Mammary epithelial cell (primary cell): ENCODE measurements at regions of chr9 and their contacts with region 1.

Region 1: GRCh38 chr9:69174616-69175463 is 763 bp downstream of the TJP2 start:
- DNase-seq: peak; percentile 97
- H3K4me3 ChIP-seq: peak overlapping the region; percentile 69 to 95 (median 76)
- H3K27ac ChIP-seq: peak overlapping the region; percentile 99
- H3K4me1 ChIP-seq: peaks cover 79% of the 10 kb centered on the region
- H3K27me3 ChIP-seq: no peaks in the 10 kb centered on the region
- CTCF ChIP-seq: no peak

Region 2: GRCh38 chr9:69107771-69108170 is 67.1 kb before region 1 on chr9:
- CTCF ChIA-PET with region 1: no interaction called
- dilution Hi-C with region 1: no loop called
- in situ Hi-C with region 1: no loop called
- intact Hi-C with region 1: no loop called
- DNase-seq: no peak
- H3K4me3 ChIP-seq: no peak overlapping the region
- H3K27ac ChIP-seq: no peak overlapping the region
- H3K4me1 ChIP-seq: peaks cover 7% of the 10 kb centered on the region
- H3K27me3 ChIP-seq: no peaks in the 10 kb centered on the region
- CTCF ChIP-seq: no peak

Region 3: GRCh38 chr9:69131682-69132081 is 43.2 kb before region 1 on chr9:
- CTCF ChIA-PET with region 1: no interaction called
- dilution Hi-C with region 1: no loop called
- in situ Hi-C with region 1: loop called in 1 of 2 experiments (anchors 10 kb)
- intact Hi-C with region 1: loop called (anchors 1 kb)
- DNase-seq: peak; percentile 98
- H3K4me3 ChIP-seq: no peak overlapping the region
- H3K27ac ChIP-seq: peak overlapping the region; percentile 91
- H3K4me1 ChIP-seq: peaks cover 28% of the 10 kb centered on the region
- H3K27me3 ChIP-seq: no peaks in the 10 kb centered on the region
- CTCF ChIP-seq: no peak

Region 4: GRCh38 chr9:69186841-69187611 is 12.2 kb after region 1 on chr9:
- CTCF ChIA-PET with region 1: interaction called, 3 read pairs
- dilution Hi-C with region 1: no loop called
- in situ Hi-C with region 1: no loop called
- intact Hi-C with region 1: loop called (anchors 2 kb)
- DNase-seq: peak; percentile 62
- H3K4me3 ChIP-seq: no peak overlapping the region
- H3K27ac ChIP-seq: peak overlapping the region; percentile 75
- H3K4me1 ChIP-seq: peaks cover 24% of the 10 kb centered on the region
- H3K27me3 ChIP-seq: no peaks in the 10 kb centered on the region
- CTCF ChIP-seq: no peak

Region 5: GRCh38 chr9:69193685-69194032 is 18.8 kb after region 1 on chr9:
- CTCF ChIA-PET with region 1: interaction called, 3 read pairs
- dilution Hi-C with region 1: no loop called
- in situ Hi-C with region 1: no loop called
- intact Hi-C with region 1: loop called (anchors 1 kb)
- DNase-seq: no peak
- H3K4me3 ChIP-seq: no peak overlapping the region
- H3K27ac ChIP-seq: no peak overlapping the region
- H3K4me1 ChIP-seq: no peaks in the 10 kb centered on the region
- H3K27me3 ChIP-seq: no peaks in the 10 kb centered on the region
- CTCF ChIP-seq: peak in 1 of 2 donors; percentile 25